ENCODE measurements at regions of chr3 and their contacts with region 1.

Region 1: GRCh38 chr3:46089237-46090011 is 62.1 kb upstream of the XCR1 start:
- DNase-seq: peak; percentile 52
- H3K4me3 ChIP-seq: no peak overlapping the region
- CTCF ChIP-seq: no peak

Region 2: DNA sequence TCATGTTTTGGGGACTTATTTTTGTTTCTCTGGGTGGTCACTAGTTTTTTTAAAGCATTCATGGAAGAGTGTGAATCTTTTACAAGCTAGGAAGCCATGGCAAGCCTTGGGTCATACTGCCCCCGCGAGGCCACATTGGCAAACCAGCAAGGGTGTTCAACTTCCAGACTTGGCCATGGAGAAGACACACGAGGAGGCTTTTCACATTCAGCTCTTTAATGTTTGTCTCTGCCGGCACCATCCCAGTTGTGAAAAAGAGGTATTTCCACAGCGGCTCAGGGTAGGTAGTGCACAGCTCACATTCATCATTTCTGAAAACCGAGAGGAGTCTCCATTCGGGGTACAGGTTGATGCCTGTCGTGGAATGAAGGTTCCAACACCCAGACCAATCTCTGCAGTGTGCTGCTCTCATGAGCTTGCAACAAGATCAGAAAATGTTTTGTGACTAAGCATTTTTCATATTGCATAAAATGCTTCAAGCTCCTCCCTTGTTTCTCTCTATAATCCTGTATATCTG is 289.1 kb after region 1 on chr3:
- CTCF ChIA-PET with region 1: interaction called, 20 read pairs
- POLR2A ChIA-PET with region 1: no interaction called
- DNase-seq: no peak
- H3K4me3 ChIP-seq: no peak overlapping the region
- CTCF ChIP-seq: peak; percentile 70

Region 3: DNA sequence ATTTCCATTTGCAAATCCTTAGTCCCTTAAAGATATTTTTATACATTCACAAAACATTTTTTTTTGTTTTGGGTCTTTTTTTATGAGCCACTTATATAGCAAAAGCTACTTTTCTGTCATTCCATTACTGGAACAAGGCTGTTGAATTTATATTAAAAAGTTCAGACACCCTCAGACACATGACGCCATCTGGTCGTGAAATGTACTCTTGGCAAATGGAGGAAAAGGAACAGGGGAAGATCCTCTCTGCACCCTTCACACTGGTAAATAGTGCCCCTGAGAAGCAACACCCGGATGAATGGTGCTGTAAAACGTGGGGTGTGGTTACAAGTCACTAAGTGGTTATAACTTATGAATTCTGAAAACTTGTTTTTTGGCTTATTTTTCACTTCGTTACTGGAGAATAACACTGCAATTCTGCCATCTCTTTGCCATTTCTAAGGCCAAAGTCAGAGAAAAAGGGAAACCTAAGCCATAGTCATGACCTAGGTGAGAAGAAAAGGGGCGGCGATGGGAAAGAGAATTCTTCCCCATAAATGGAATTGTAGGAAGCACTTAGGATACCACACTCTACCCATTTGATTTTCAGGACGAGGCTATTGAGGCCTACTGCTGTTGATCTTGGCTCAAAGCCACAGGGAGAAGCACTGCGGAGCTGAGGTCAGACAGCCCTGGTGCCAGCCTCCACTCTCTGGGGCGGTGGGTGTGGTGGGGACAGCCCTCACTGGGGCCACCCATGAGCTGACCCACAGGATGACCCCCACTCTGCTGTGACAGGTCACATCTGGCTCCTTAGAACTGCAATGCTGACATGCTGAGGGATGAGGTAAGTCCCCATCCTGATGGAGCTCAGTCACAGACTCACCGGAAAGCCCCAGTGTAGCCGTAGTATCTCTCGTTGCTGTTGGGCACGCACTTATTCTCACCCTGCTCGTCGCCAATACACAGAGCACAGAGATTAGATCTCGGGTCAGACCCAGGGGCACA is 353.4 kb after region 1 on chr3:
- CTCF ChIA-PET with region 1: interaction called, 10 read pairs
- POLR2A ChIA-PET with region 1: no interaction called
- DNase-seq: no peak
- H3K4me3 ChIP-seq: no peak overlapping the region
- CTCF ChIP-seq: peak; percentile 47

Measured in AG04449 (cell line).